Activated naive CD4-positive, alpha-beta T cell treated with anti-CD3 and anti-CD28 coated beads for 36 hours (primary cell): ENCODE measurements at regions of chr1 and their contacts with region 1.

Region 1: DNA sequence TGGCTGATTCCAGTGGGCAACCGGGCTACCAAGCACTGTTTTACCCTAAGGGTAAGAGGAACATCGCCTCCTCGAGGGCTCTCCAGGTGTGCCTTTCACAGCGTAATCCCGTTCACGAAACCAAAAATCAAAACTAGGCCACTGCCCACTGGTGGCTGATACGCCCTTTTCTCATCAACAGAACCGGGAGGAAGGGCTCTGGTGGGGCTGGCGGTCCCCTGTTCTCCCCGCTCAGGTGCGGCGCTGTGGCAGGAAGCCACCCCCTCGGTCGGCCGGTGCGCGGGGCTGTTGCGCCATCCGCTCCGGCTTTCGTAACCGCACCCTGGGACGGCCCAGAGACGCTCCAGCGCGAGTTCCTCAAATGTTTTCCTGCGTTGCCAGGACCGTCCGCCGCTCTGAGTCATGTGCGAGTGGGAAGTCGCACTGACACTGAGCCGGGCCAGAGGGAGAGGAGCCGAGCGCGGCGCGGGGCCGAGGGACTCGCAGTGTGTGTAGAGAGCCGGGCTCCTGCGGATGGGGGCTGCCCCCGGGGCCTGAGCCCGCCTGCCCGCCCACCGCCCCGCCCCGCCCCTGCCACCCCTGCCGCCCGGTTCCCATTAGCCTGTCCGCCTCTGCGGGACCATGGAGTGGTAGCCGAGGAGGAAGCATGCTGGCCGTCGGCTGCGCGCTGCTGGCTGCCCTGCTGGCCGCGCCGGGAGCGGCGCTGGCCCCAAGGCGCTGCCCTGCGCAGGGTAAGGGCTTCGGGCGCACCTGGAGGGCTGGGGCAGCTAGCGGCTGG is at the start of gene IL6R:
- DNase-seq: peak; percentile 87
- H3K4me3 Mint-ChIP-seq: peak within 1 kb of the TSS; percentile 94
- H3K27ac Mint-ChIP-seq: peak within 1 kb of the TSS; percentile 96
- H3K4me1 Mint-ChIP-seq: peaks cover 77% of the 10 kb centered on the region
- H3K27me3 Mint-ChIP-seq: no peaks in the 10 kb centered on the region
- total RNA-seq, gene IL6R: 17.3 to 25.9 TPM

Region 2: GRCh38 chr1:154335025-154335714 is 70.0 kb before region 1 on chr1:
- CTCF ChIA-PET with region 1: interaction called, 17 read pairs
- intact Hi-C with region 1: no loop called
- DNase-seq: peak; percentile 97
- H3K4me3 Mint-ChIP-seq: peak overlapping the region; percentile 30
- H3K27ac Mint-ChIP-seq: peak overlapping the region; percentile 88
- H3K4me1 Mint-ChIP-seq: peaks cover 62% of the 10 kb centered on the region
- H3K27me3 Mint-ChIP-seq: no peaks in the 10 kb centered on the region

Region 3: DNA sequence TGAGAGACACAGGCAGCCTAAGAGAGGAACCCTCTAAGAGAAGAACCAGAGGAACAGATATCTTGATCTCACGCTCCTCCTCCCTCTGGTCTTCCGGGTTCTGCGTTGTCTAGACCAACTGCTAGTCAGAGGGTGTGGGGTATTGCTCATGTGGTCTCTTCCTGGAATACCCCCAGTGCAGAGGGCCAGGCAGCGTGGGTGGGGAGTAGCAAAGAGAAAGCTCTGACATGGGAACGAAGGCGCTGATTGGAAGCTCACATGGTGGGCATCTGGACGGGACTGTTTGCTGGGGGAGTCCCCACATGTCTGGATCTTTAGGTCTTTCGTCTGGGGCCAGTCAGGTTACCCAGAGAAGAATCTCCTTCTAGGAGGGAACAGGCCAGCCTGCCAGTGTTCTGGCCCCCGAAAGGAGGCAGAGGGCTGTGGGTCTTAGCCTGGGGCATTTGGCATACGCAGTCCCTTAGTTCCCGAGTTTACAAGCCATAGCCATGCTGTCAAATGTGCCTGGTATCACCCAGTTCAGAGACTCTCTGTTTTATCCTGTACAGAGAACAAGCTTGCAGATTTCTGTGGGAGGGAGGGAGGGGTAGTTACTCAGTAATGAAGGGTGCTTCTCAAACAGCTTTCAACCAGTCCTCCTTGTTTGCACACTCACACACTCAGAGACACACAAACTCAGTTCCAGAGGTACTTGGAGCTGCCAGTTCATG is 18.4 kb before region 1 on chr1:
- CTCF ChIA-PET with region 1: interaction called, 3 read pairs
- intact Hi-C with region 1: loop called (anchors 1 kb)
- DNase-seq: peak; percentile 88
- H3K4me3 Mint-ChIP-seq: peak overlapping the region; percentile 60
- H3K27ac Mint-ChIP-seq: peak overlapping the region; percentile 90
- H3K4me1 Mint-ChIP-seq: peaks cover 39% of the 10 kb centered on the region
- H3K27me3 Mint-ChIP-seq: no peaks in the 10 kb centered on the region

Region 4: GRCh38 chr1:154442006-154442740 is 37.0 kb after region 1 on chr1:
- CTCF ChIA-PET with region 1: interaction called, 7 read pairs
- intact Hi-C with region 1: loop called (anchors 1 kb)
- DNase-seq: no peak
- H3K4me3 Mint-ChIP-seq: no peak overlapping the region
- H3K27ac Mint-ChIP-seq: no peak overlapping the region
- H3K4me1 Mint-ChIP-seq: peaks cover 72% of the 10 kb centered on the region
- H3K27me3 Mint-ChIP-seq: no peaks in the 10 kb centered on the region

Region 5: GRCh38 chr1:154479764-154480421 is 74.7 kb after region 1 on chr1:
- CTCF ChIA-PET with region 1: interaction called, 14 read pairs
- intact Hi-C with region 1: loop called (anchors 1 kb)
- DNase-seq: peak; percentile 73
- H3K4me3 Mint-ChIP-seq: no peak overlapping the region
- H3K27ac Mint-ChIP-seq: no peak overlapping the region
- H3K4me1 Mint-ChIP-seq: peaks cover 28% of the 10 kb centered on the region
- H3K27me3 Mint-ChIP-seq: no peaks in the 10 kb centered on the region

Region 6: GRCh38 chr1:154607609-154608396 is 202.6 kb after region 1 on chr1 and contains the start of gene ADAR:
- CTCF ChIA-PET with region 1: no interaction called
- intact Hi-C with region 1: loop called (anchors 2 kb)
- DNase-seq: peak; percentile 97
- H3K4me3 Mint-ChIP-seq: peak within 1 kb of the TSS; percentile 91
- H3K27ac Mint-ChIP-seq: peak within 1 kb of the TSS; percentile 96
- H3K4me1 Mint-ChIP-seq: peaks cover 75% of the 10 kb centered on the region
- H3K27me3 Mint-ChIP-seq: no peaks in the 10 kb centered on the region
- total RNA-seq, gene ADAR: 301 to 313 TPM